Activated CD4-positive, alpha-beta memory T cell treated with anti-CD3 and anti-CD28 coated beads for 36 hours (primary cell): ENCODE measurements at regions of chr3 and their contacts with region 1.

Region 1: GRCh38 chr3:40524568-40525285 is at the start of gene ZNF621:
- DNase-seq: peak; percentile 88
- H3K4me3 Mint-ChIP-seq: peak within 1 kb of the TSS; percentile 91
- H3K27ac Mint-ChIP-seq: peak within 1 kb of the TSS; percentile 84
- H3K4me1 Mint-ChIP-seq: peaks cover 23% of the 10 kb centered on the region
- H3K27me3 Mint-ChIP-seq: no peaks in the 10 kb centered on the region
- total RNA-seq, gene ZNF621: 19.7 to 22.3 TPM

Region 2: DNA sequence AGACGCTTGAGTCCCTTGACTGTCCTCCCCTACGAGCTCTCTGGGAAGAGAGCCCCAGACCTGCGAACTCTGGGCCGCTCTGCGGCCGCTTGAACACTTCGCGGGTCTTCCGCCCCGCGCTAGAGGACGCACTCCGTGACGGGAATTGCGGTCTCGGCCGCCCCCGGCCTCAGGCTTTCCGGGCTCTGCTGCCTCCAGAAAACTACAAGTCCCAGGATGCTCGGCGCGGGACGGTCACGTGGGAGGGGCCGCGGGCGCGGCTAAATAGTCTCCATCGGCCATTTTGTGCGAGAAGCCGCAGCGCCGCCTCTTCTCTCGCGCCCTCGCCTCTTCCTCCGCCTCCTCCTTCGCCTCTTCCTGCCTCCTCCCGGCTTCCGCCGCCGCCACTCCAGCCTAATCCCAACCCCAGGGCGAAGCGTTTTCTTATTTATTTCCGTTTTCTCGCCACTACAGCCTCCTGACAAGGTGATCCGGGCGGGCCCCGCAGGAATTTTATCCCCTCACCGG is 215.3 kb before region 1 on chr3 and contains the start of gene EIF1B:
- CTCF ChIA-PET with region 1: interaction called, 4 read pairs
- POLR2A ChIA-PET with region 1: no interaction called
- intact Hi-C with region 1: loop called (anchors 1 kb)
- DNase-seq: peak; percentile 99
- H3K4me3 Mint-ChIP-seq: peak within 1 kb of the TSS; percentile 96
- H3K27ac Mint-ChIP-seq: peak within 1 kb of the TSS; percentile 97
- H3K4me1 Mint-ChIP-seq: peaks cover 23% of the 10 kb centered on the region
- H3K27me3 Mint-ChIP-seq: no peaks in the 10 kb centered on the region
- total RNA-seq, gene EIF1B: 48.6 to 51.0 TPM

Region 3: GRCh38 chr3:40476478-40477470 is 48.0 kb before region 1 on chr3 and contains the start of gene ZNF619:
- CTCF ChIA-PET with region 1: no interaction called
- POLR2A ChIA-PET with region 1: interaction called, 4 read pairs
- intact Hi-C with region 1: loop called (anchors 2 kb)
- DNase-seq: peak; percentile 66
- H3K4me3 Mint-ChIP-seq: peak within 1 kb of the TSS; percentile 84
- H3K27ac Mint-ChIP-seq: peak within 1 kb of the TSS; percentile 67
- H3K4me1 Mint-ChIP-seq: peaks cover 12% of the 10 kb centered on the region
- H3K27me3 Mint-ChIP-seq: no peaks in the 10 kb centered on the region
- total RNA-seq, gene ZNF619: 7.4 to 8.3 TPM

Region 4: GRCh38 chr3:40505599-40506462 is 18.9 kb before region 1 on chr3 and contains the start of gene ZNF620:
- CTCF ChIA-PET with region 1: interaction called, 4 read pairs
- POLR2A ChIA-PET with region 1: no interaction called
- intact Hi-C with region 1: loop called (anchors 1 kb)
- DNase-seq: peak; percentile 59
- H3K4me3 Mint-ChIP-seq: peak within 1 kb of the TSS; percentile 91
- H3K27ac Mint-ChIP-seq: peak within 1 kb of the TSS; percentile 72
- H3K4me1 Mint-ChIP-seq: peaks cover 17% of the 10 kb centered on the region
- H3K27me3 Mint-ChIP-seq: no peaks in the 10 kb centered on the region
- total RNA-seq, gene ZNF620: 2.9 to 3.7 TPM

Region 5: GRCh38 chr3:40546816-40547215 is 22.1 kb after region 1 on chr3:
- CTCF ChIA-PET with region 1: no interaction called
- POLR2A ChIA-PET with region 1: no interaction called
- intact Hi-C with region 1: no loop called
- DNase-seq: no peak
- H3K4me3 Mint-ChIP-seq: no peak overlapping the region
- H3K27ac Mint-ChIP-seq: no peak overlapping the region
- H3K4me1 Mint-ChIP-seq: no peaks in the 10 kb centered on the region
- H3K27me3 Mint-ChIP-seq: no peaks in the 10 kb centered on the region

Region 6: GRCh38 chr3:40623567-40623966 is 98.8 kb after region 1 on chr3:
- CTCF ChIA-PET with region 1: no interaction called
- POLR2A ChIA-PET with region 1: no interaction called
- intact Hi-C with region 1: no loop called
- DNase-seq: peak; percentile 39
- H3K4me3 Mint-ChIP-seq: no peak overlapping the region
- H3K27ac Mint-ChIP-seq: no peak overlapping the region
- H3K4me1 Mint-ChIP-seq: no peaks in the 10 kb centered on the region
- H3K27me3 Mint-ChIP-seq: peaks cover 5% of the 10 kb centered on the region

Region 7: DNA sequence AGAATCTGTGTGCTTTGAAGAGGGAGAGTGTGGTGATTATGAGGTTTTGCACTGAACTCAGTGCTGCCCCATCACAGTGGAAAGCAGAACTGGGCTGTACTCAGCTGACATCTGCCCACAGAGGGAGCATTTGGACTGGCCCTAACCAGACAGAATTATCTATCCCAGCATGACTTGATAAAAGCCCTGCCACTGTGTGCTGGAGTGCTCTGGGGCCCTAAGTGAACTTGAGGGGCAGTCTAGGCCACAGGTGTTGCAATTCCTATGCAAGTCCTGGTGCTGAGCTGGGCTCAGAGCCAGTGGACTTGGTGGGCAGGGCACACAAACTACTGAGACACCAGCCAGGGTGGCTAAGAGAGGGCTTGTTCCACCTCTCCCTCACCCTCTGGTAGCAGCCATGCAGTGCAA is 405.4 kb after region 1 on chr3:
- CTCF ChIA-PET with region 1: no interaction called
- POLR2A ChIA-PET with region 1: no interaction called
- intact Hi-C with region 1: no loop called
- DNase-seq: no peak
- H3K4me3 Mint-ChIP-seq: no peak overlapping the region
- H3K27ac Mint-ChIP-seq: no peak overlapping the region
- H3K4me1 Mint-ChIP-seq: no peaks in the 10 kb centered on the region
- H3K27me3 Mint-ChIP-seq: peaks cover 21% of the 10 kb centered on the region